H1 (cell line): ENCODE measurements at regions of chr7 and their contacts with region 1.

Region 1: GRCh38 chr7:154844499-154844898 is 158.4 kb downstream of the PAXIP1 start:
- DNase-seq: no peak
- H3K4me3 ChIP-seq: no peak overlapping the region
- H3K27ac ChIP-seq: no peak overlapping the region
- H3K4me1 ChIP-seq: no peaks in the 10 kb centered on the region; a peak in 1 of 7 replicates
- H3K27me3 ChIP-seq: no peaks in the 10 kb centered on the region
- CTCF ChIP-seq: peak; percentile 36 to 50 (median 47)
- EP300 ChIP-seq: no peak
- POLR2A ChIP-seq: no peak
- RAD21 ChIP-seq: peak; percentile 5 to 45; a peak in 2 of 4 replicates

Region 2: GRCh38 chr7:154512121-154512833 is 332.2 kb before region 1 on chr7:
- CTCF ChIA-PET with region 1: no interaction called
- POLR2A ChIA-PET with region 1: no interaction called
- DNase-seq: no peak
- H3K4me3 ChIP-seq: no peak overlapping the region
- H3K27ac ChIP-seq: no peak overlapping the region
- H3K4me1 ChIP-seq: no peaks in the 10 kb centered on the region
- H3K27me3 ChIP-seq: no peaks in the 10 kb centered on the region
- CTCF ChIP-seq: no peak
- EP300 ChIP-seq: no peak
- POLR2A ChIP-seq: no peak
- RAD21 ChIP-seq: no peak

Region 3: GRCh38 chr7:154857261-154857660 is 12.8 kb after region 1 on chr7:
- CTCF ChIA-PET with region 1: interaction called, 10 read pairs
- POLR2A ChIA-PET with region 1: no interaction called
- DNase-seq: no peak
- H3K4me3 ChIP-seq: no peak overlapping the region
- H3K27ac ChIP-seq: no peak overlapping the region
- H3K4me1 ChIP-seq: no peaks in the 10 kb centered on the region
- H3K27me3 ChIP-seq: no peaks in the 10 kb centered on the region; a peak in 1 of 7 replicates
- CTCF ChIP-seq: no peak
- EP300 ChIP-seq: no peak
- POLR2A ChIP-seq: no peak
- RAD21 ChIP-seq: no peak